Left cardiac atrium (tissue), 4 donors: ENCODE measurements at regions of chr11 and their contacts with region 1.

Region 1: GRCh38 chr11:2444821-2445745 is at the start of gene KCNQ1:
- DNase-seq: no peak
- ATAC-seq: peak; percentile 83 to 87
- total RNA-seq, gene KCNQ1: 33.5 to 39.7 TPM

Region 2: DNA sequence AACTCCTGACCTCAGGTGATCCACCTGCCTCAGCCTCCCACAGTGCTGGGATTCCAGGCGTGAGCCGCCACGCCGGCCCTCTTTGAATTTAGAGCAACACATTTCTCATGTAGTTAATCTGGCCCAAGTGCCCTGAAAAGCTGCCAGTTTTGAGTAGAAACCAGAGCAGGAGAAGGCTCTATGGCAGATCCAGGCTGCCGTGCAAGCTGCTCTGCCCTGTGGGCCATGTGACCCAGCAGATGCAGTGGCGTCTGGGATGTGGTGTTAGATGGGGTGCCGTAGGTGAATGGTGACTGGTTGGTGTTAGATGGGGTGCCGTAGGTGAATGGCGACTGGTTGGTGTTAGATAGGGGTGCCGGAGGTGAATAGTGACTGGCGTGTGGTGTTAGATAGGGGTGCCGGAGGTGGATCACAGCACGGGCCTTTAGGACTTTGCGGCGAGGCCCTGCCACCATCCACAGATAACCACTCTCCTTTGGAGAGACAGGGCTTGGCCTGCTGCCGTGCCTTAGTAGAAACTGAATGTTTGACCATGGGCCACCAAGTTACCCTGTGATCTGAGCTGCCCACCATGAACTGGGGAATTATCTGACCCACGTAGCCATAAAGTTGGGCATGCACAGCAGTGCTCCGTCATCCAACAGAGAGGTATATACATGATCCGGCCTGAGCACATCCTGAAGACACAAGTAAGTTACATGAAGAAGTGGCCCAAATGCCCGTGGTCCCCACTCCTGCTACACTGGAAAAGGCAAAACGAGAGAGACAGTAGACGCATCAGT is 207.4 kb before region 1 on chr11:
- intact Hi-C with region 1: no loop called
- DNase-seq: no peak
- ATAC-seq: no peak

Region 3: DNA sequence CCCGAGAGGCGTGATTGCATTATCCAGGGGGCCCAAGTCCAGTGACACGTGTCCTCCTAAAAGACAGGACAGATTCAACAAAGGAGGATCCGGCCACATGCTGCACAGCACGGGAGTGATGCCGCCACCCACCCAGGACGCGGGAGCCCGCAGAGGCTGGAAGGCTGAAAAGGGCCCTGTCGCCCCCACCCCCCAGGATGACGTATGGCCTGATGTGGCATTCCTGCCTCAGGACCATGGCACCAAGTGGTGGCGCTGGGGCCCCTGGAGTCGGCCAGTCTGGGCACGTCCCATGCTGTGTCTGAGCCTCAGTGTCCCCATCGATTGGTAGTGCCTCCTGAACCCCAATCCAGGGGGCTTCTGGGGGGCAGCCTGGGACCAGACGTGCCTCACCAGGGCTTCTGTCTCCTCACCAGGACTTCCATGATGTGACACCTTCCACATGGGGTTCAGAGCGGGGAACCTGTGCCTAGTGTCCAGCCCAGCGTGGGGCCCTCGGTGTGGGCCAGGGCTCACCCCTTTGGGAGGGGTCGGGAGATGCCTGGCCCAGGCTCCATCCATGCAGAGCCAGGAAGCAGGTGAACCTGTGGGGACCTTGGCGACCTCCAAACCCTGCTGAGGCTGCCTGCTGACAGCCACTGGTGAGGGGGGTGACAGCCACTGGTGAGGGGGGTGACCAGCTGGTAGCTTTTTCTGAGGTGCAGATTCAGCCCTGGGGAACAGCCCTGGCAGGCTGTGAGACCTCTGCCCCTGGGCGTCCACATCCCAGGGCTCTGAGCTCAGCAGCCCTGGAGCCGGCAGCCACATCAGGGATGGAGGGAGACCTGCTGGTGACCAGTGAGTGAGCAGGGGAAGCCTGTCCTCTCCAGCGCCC is 75.0 kb after region 1 on chr11:
- intact Hi-C with region 1: loop called in 1 of 2 experiments (anchors 5 kb)
- DNase-seq: peak; percentile 11
- ATAC-seq: no peak

Region 4: DNA sequence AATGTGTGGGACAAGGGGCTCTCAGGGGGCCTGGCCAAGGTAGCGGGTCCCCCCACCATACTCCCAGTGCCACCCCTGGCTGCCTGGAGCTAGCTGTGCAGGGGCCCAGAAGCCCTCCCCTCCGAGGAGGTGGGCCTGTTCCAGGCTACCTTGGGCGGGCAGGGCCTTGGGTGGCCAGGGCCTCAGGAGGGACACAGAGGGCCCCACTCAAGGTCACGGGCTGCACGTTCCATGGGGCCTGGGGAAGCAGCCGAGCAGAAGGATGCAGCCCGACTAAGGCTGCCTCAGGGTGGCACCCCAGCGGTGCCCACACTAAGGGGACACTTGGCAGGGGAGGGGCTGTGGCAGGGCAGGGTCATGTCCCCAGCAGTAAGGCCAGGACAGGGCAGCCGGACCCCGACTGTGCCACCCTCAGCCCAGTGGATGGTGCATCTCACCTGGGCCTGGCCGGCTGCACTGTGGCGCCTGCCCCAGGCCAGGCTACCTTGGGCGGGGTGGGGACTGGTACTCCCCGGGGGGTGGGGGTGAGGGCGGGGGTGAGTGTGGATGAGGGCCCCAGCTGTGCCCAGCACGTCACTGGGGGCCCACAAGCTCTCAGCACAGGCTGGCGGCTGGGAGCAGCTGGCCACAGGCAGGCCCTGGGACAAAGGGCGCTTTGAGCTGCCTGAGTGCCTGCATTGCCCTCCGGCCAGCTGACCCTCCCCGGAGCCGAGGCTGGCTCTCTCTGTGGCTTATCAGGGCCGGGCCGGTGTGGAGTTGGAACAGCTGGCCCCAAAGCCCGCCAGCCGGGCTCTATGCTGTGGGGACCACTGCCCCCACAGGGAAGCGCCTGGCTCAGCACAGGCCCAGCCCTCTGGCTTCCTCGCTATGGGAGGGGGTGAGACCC is 116.9 kb after region 1 on chr11:
- intact Hi-C with region 1: no loop called
- DNase-seq: peak; percentile 19
- ATAC-seq: peak; percentile 22 to 28

Region 5: GRCh38 chr11:2703363-2704141 is 258.5 kb after region 1 on chr11:
- intact Hi-C with region 1: no loop called
- DNase-seq: peak; percentile 14
- ATAC-seq: no peak